GM12878 (cell line): ENCODE measurements at regions of chr19 and their contacts with region 1.

Region 1: GRCh38 chr19:45692187-45693105 is at the start of gene QPCTL:
- DNase-seq: peak; percentile 100
- ATAC-seq: peak; percentile 93
- H3K4me3 ChIP-seq: peak within 1 kb of the TSS; percentile 76
- H3K27ac ChIP-seq: peak within 1 kb of the TSS; percentile 82
- H3K4me1 ChIP-seq: peaks cover 10% of the 10 kb centered on the region
- H3K27me3 ChIP-seq: no peaks in the 10 kb centered on the region
- CTCF ChIP-seq: no peak
- EP300 ChIP-seq: peak; percentile 13 to 31; a peak in 1 of 4 replicates
- POLR2A ChIP-seq: peak; percentile 93
- RAD21 ChIP-seq: no peak
- polyA plus RNA-seq, gene QPCTL: 1.1 to 1.7 TPM

Region 2: DNA sequence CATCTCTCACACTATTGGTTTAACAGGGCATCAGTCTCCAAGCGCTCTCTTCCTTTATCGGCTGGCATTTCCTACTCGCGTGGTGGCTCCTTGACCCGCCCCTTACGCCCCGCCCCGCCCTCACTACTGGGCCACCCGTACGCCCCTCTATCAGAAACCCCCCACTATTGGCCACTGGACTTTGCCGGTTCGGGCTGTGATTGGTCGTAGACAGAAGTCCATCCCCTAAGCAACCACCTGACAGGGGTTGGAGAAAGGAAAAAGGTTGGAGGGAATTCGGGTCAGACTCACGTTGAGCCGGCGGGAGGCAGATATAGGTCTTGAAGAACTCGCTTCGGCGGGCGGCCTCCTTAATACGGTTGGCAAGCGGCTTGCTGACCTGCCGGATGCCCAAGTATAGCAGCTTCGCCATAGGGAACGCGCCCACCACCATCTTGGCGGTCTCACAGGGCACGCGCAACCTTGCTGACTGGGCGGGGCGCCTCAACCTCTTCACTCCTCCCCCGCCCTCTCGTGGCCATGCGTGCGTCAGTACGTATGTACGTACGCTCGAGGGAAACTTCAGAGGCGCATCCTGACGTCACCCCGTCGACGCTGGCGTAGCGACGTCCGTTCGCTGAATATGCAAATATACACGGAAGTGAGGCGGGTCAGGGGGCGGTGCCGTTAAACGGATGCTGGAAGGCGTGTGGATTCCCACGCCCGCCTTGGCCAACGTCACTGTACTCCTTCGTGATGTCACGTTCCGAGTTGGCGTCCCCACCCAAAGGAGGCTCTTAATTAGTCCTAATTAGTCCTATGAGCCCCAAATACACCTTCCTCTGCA is 107.9 kb before region 1 on chr19 and contains the start of gene OPA3:
- CTCF ChIA-PET with region 1: no interaction called
- POLR2A ChIA-PET with region 1: interaction called, 7 read pairs
- RAD21 ChIA-PET with region 1: no interaction called
- SMC1A ChIA-PET with region 1: interaction called, 3 read pairs
- in situ Hi-C with region 1: no loop called
- intact Hi-C with region 1: loop called (anchors 5 kb)
- DNase-seq: peak; percentile 100
- ATAC-seq: peak; percentile 96
- H3K4me3 ChIP-seq: peak within 1 kb of the TSS; percentile 99
- H3K27ac ChIP-seq: peak within 1 kb of the TSS; percentile 85
- H3K4me1 ChIP-seq: peaks cover 6% of the 10 kb centered on the region; the same call in 1 of the 2 replicates
- H3K27me3 ChIP-seq: no peaks in the 10 kb centered on the region
- CTCF ChIP-seq: no peak
- EP300 ChIP-seq: peak in 1 of 2 experiments; percentile 58; a peak in 1 of 4 replicates
- POLR2A ChIP-seq: peak; percentile 93
- RAD21 ChIP-seq: no peak
- polyA plus RNA-seq, gene OPA3: 2.2 to 2.3 TPM

Region 3: DNA sequence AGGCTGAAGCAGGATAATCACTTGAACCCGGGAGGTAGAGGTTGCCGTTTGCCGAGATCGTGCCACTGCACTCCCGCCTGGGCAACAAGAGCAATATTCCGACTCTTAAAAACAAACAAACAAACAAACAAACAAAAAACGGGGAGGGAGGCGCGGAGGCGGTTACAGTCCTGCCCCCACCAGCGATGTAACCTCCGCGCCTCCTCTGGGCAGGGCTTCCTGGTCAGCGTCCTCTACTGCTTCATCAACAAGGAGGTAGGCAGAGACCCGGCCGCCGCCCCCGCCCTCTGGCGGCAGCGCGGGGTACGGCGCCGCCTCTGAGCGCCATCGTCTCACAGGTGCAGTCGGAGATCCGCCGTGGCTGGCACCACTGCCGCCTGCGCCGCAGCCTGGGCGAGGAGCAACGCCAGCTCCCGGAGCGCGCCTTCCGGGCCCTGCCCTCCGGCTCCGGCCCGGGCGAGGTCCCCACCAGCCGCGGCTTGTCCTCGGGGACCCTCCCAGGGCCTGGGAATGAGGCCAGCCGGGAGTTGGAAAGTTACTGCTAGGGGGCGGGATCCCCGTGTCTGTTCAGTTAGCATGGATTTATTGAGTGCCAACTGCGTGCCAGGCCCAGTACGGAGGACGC is 10.9 kb before region 1 on chr19:
- CTCF ChIA-PET with region 1: interaction called, 27 read pairs
- POLR2A ChIA-PET with region 1: interaction called, 54 read pairs
- RAD21 ChIA-PET with region 1: interaction called, 9 read pairs
- SMC1A ChIA-PET with region 1: interaction called, 9 read pairs
- in situ Hi-C with region 1: no loop called
- intact Hi-C with region 1: no loop called
- DNase-seq: no peak
- ATAC-seq: peak; percentile 94
- H3K4me3 ChIP-seq: 0 out of 2 replicates have a peak overlapping the region, but pooled peaks have one; percentile 18
- H3K27ac ChIP-seq: no peak overlapping the region
- H3K4me1 ChIP-seq: peaks cover 17% of the 10 kb centered on the region
- H3K27me3 ChIP-seq: no peaks in the 10 kb centered on the region
- CTCF ChIP-seq: peak; percentile 81 to 97 (median 93)
- EP300 ChIP-seq: no peak
- POLR2A ChIP-seq: peak; percentile 65
- RAD21 ChIP-seq: peak; percentile 51; the same call in 1 of the 2 replicates

Region 4: GRCh38 chr19:45711851-45712698 is 19.6 kb after region 1 on chr19:
- CTCF ChIA-PET with region 1: interaction called, 73 read pairs
- POLR2A ChIA-PET with region 1: interaction called, 17 read pairs
- RAD21 ChIA-PET with region 1: interaction called, 25 read pairs
- SMC1A ChIA-PET with region 1: interaction called, 31 read pairs
- in situ Hi-C with region 1: no loop called
- intact Hi-C with region 1: no loop called
- DNase-seq: no peak
- ATAC-seq: no peak
- H3K4me3 ChIP-seq: no peak overlapping the region
- H3K27ac ChIP-seq: no peak overlapping the region
- H3K4me1 ChIP-seq: peaks cover 17% of the 10 kb centered on the region
- H3K27me3 ChIP-seq: no peaks in the 10 kb centered on the region
- CTCF ChIP-seq: no peak
- EP300 ChIP-seq: no peak
- POLR2A ChIP-seq: peak; percentile 35
- RAD21 ChIP-seq: no peak

Region 5: DNA sequence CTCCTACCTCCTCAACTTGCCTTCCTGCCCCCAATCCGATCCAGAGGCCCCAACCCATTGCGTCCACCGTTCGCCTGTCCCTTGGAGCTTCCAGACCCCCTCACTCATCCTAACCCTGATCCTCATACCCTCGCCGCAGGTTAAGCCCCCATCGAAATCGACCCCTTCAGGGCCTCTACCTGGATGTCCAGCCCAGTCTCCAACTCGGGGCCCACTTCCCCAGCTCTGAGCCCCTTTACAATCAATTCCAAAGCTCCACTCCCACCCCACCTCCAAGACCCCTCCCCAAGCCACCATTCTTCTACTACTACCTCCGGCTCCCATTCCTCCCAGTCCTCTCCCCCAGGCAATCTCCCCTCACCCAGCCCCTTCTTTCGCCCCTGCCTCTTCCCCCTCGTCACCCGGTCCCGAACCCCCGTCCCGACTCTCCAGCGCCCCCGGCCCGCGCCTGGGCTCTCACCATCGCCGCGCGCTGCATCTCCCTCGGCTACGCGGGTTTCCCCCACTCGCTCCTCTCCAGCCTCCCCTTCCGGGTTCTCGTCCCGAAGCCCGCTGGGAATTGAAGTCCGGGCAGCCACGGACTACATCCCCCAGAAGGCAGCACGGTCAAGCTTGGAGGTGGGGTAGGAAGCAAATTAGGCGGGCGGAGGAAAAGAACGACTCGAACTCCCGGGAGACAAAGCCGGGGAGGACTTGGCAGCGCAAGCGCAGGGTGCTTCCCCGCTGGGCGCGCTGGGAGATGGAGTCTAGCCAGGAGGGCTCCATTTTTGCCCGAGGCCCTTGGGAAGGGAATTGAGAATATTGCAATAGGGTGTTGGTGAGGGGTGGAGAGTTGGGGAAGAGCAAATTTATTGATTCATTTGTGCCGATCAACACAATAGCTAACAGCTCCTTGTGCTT is 38.2 kb after region 1 on chr19 and contains the start of gene FBXO46:
- CTCF ChIA-PET with region 1: interaction called, 20 read pairs
- POLR2A ChIA-PET with region 1: interaction called, 32 read pairs
- RAD21 ChIA-PET with region 1: interaction called, 11 read pairs
- SMC1A ChIA-PET with region 1: interaction called, 11 read pairs
- in situ Hi-C with region 1: no loop called
- intact Hi-C with region 1: no loop called
- DNase-seq: peak; percentile 96
- ATAC-seq: peak; percentile 98
- H3K4me3 ChIP-seq: peak within 1 kb of the TSS; percentile 97
- H3K27ac ChIP-seq: peak within 1 kb of the TSS; percentile 90
- H3K4me1 ChIP-seq: peaks cover 4% of the 10 kb centered on the region; the same call in 1 of the 2 replicates
- H3K27me3 ChIP-seq: no peaks in the 10 kb centered on the region
- CTCF ChIP-seq: peak; percentile 28 to 40 (median 35); a peak in 5 of 6 replicates
- EP300 ChIP-seq: no peak
- POLR2A ChIP-seq: peak; percentile 87
- RAD21 ChIP-seq: peak; percentile 31; the same call in 1 of the 2 replicates
- polyA plus RNA-seq, gene FBXO46: 2.5 to 7.1 TPM